Activated CD4-positive, alpha-beta memory T cell treated with anti-CD3 and anti-CD28 coated beads for 36 hours (primary cell): ENCODE measurements at regions of chr1 and their contacts with region 1.

Region 1: GRCh38 chr1:114428083-114428749 is 82.8 kb downstream of the TRIM33 start:
- DNase-seq: no peak
- H3K4me3 Mint-ChIP-seq: no peak overlapping the region
- H3K27ac Mint-ChIP-seq: no peak overlapping the region
- H3K4me1 Mint-ChIP-seq: no peaks in the 10 kb centered on the region
- H3K27me3 Mint-ChIP-seq: no peaks in the 10 kb centered on the region

Region 2: DNA sequence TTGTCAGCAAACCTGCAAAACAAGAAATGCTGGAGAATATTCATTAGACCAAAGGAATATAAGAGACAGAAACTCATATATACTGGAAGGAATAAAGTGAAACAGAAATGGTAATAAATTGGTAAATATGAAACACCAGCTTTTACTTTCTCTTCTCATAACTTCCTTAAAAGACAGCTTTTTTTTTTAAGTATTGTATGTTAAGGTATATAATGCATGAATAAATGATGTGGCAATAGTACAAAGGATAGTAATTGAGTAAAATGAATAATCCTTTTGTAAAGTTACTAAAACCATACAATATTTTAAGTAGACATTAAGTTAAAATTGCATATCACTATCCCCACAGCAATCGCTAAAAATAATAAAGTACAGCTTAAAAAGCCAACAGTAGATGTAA is 18.0 kb after region 1 on chr1:
- CTCF ChIA-PET with region 1: interaction called, 10 read pairs
- POLR2A ChIA-PET with region 1: interaction called, 4 read pairs
- intact Hi-C with region 1: no loop called
- DNase-seq: no peak
- H3K4me3 Mint-ChIP-seq: no peak overlapping the region
- H3K27ac Mint-ChIP-seq: no peak overlapping the region
- H3K4me1 Mint-ChIP-seq: peaks cover 9% of the 10 kb centered on the region
- H3K27me3 Mint-ChIP-seq: no peaks in the 10 kb centered on the region

Region 3: DNA sequence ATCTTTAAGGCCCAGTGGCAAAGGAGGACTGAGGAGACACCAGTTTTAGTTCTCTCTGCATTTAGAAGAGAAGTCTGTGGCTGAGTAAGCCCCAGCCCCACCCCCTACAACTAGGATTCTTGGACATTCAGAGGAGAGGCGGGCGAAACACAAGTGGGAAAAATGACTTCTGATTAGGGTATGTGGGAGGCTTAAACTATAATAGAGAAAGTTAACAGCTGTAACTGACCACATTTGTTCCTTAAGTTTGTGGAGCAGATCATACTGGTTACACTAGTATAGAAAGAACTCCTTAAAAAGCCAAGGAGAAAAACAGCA is 94.0 kb after region 1 on chr1:
- CTCF ChIA-PET with region 1: interaction called, 10 read pairs
- POLR2A ChIA-PET with region 1: no interaction called
- intact Hi-C with region 1: no loop called
- DNase-seq: no peak
- H3K4me3 Mint-ChIP-seq: no peak overlapping the region
- H3K27ac Mint-ChIP-seq: no peak overlapping the region
- H3K4me1 Mint-ChIP-seq: no peaks in the 10 kb centered on the region
- H3K27me3 Mint-ChIP-seq: peaks cover 5% of the 10 kb centered on the region